Caco-2 (cell line): ENCODE measurements at regions of chr11 and their contacts with region 1.

Region 1: GRCh38 chr11:6531267-6531752 is 34.2 kb downstream of the DNHD1 start:
- DNase-seq: peak in 1 of 2 experiments; percentile 55
- H3K4me3 ChIP-seq: no peak overlapping the region
- H3K4me3 Mint-ChIP-seq: no peak overlapping the region
- H3K27ac Mint-ChIP-seq: no peak overlapping the region
- H3K4me1 ChIP-seq: peaks cover 4% of the 10 kb centered on the region; the same call in 1 of the 2 replicates
- H3K4me1 Mint-ChIP-seq: peaks cover 6% of the 10 kb centered on the region
- H3K27me3 ChIP-seq: no peaks in the 10 kb centered on the region
- H3K27me3 Mint-ChIP-seq: no peaks in the 10 kb centered on the region
- CTCF ChIP-seq: peak; percentile 74 to 80

Region 2: GRCh38 chr11:6156628-6157359 is 374.5 kb before region 1 on chr11:
- CTCF ChIA-PET with region 1: no interaction called
- POLR2A ChIA-PET with region 1: no interaction called
- intact Hi-C with region 1: no loop called
- DNase-seq: no peak
- H3K4me3 ChIP-seq: no peak overlapping the region
- H3K4me3 Mint-ChIP-seq: no peak overlapping the region
- H3K27ac Mint-ChIP-seq: no peak overlapping the region
- H3K4me1 ChIP-seq: no peaks in the 10 kb centered on the region
- H3K4me1 Mint-ChIP-seq: no peaks in the 10 kb centered on the region
- H3K27me3 ChIP-seq: no peaks in the 10 kb centered on the region
- H3K27me3 Mint-ChIP-seq: peaks cover 3% of the 10 kb centered on the region
- CTCF ChIP-seq: no peak

Region 3: GRCh38 chr11:6635082-6635932 is 104.0 kb after region 1 on chr11:
- CTCF ChIA-PET with region 1: interaction called, 6 read pairs
- POLR2A ChIA-PET with region 1: no interaction called
- intact Hi-C with region 1: loop called (anchors 1 kb)
- DNase-seq: peak; percentile 22 to 67
- H3K4me3 ChIP-seq: no peak overlapping the region
- H3K4me3 Mint-ChIP-seq: no peak overlapping the region
- H3K27ac Mint-ChIP-seq: no peak overlapping the region
- H3K4me1 ChIP-seq: peaks cover 16% of the 10 kb centered on the region
- H3K4me1 Mint-ChIP-seq: no peaks in the 10 kb centered on the region
- H3K27me3 ChIP-seq: no peaks in the 10 kb centered on the region; the same call in 1 of the 2 replicates
- H3K27me3 Mint-ChIP-seq: no peaks in the 10 kb centered on the region
- CTCF ChIP-seq: no peak

Region 4: DNA sequence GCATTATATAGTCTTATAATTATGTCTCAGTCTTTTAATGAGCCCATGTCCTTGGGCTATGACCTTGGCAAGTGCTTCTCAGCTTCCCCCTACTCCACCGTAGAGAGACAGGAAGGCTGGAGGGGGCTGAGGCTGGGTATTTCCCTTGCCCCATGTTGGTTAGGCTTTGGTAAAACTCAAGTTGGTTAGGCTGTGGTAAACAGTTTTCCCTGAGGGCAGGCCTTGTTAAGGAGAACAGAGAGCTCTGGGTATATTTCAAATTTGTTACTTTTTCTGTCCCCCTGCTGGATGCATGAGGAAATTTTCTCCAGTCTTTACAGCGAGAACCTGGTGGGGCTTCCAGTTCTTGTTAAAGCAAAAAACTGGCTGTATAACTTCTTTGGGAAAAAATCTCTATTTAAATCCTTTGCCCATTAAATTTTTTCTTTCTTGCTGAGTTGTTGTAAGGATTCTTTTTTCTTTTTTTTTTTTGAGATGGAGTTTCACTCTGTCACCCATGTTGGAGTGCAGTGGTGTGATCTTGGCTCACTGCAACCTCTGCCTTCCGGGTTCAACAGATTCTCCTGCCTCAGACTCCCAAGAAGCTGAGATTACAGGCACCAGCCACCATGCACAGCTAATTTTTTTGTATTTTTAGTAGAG is 136.5 kb after region 1 on chr11:
- CTCF ChIA-PET with region 1: interaction called, 9 read pairs
- POLR2A ChIA-PET with region 1: no interaction called
- intact Hi-C with region 1: loop called (anchors 1 kb)
- DNase-seq: peak in 1 of 2 experiments; percentile 45
- H3K4me3 ChIP-seq: no peak overlapping the region
- H3K4me3 Mint-ChIP-seq: no peak overlapping the region
- H3K27ac Mint-ChIP-seq: no peak overlapping the region
- H3K4me1 ChIP-seq: no peaks in the 10 kb centered on the region
- H3K4me1 Mint-ChIP-seq: no peaks in the 10 kb centered on the region
- H3K27me3 ChIP-seq: no peaks in the 10 kb centered on the region
- H3K27me3 Mint-ChIP-seq: peaks cover 15% of the 10 kb centered on the region
- CTCF ChIP-seq: peak; percentile 62 to 64

Region 5: GRCh38 chr11:6682936-6683861 is 151.9 kb after region 1 on chr11 and contains the start of gene MRPL17:
- CTCF ChIA-PET with region 1: interaction called, 26 read pairs
- POLR2A ChIA-PET with region 1: interaction called, 3 read pairs
- intact Hi-C with region 1: loop called (anchors 1 kb)
- DNase-seq: peak; percentile 99
- H3K4me3 ChIP-seq: peak within 1 kb of the TSS; percentile 88
- H3K4me3 Mint-ChIP-seq: peak within 1 kb of the TSS; percentile 100
- H3K27ac Mint-ChIP-seq: peak within 1 kb of the TSS; percentile 100
- H3K4me1 ChIP-seq: peaks cover 13% of the 10 kb centered on the region
- H3K4me1 Mint-ChIP-seq: peaks cover 7% of the 10 kb centered on the region
- H3K27me3 ChIP-seq: no peaks in the 10 kb centered on the region
- H3K27me3 Mint-ChIP-seq: peaks cover 5% of the 10 kb centered on the region
- CTCF ChIP-seq: peak; percentile 89 to 91
- total RNA-seq, gene MRPL17: 57.8 and 60.8 TPM in 2 replicates

Region 6: GRCh38 chr11:6757373-6757967 is 226.2 kb after region 1 on chr11:
- CTCF ChIA-PET with region 1: interaction called, 4 read pairs
- POLR2A ChIA-PET with region 1: no interaction called
- intact Hi-C with region 1: loop called (anchors 5 kb)
- DNase-seq: peak; percentile 46 to 54
- H3K4me3 ChIP-seq: no peak overlapping the region
- H3K4me3 Mint-ChIP-seq: no peak overlapping the region
- H3K27ac Mint-ChIP-seq: no peak overlapping the region
- H3K4me1 ChIP-seq: no peaks in the 10 kb centered on the region
- H3K4me1 Mint-ChIP-seq: no peaks in the 10 kb centered on the region
- H3K27me3 ChIP-seq: peaks cover 1% of the 10 kb centered on the region
- H3K27me3 Mint-ChIP-seq: peaks cover 8% of the 10 kb centered on the region
- CTCF ChIP-seq: peak; percentile 60 to 84

Region 7: GRCh38 chr11:7020183-7020917 is 489.0 kb after region 1 on chr11 and contains the starts of genes NLRP14 and ZNF214:
- CTCF ChIA-PET with region 1: no interaction called
- POLR2A ChIA-PET with region 1: no interaction called
- intact Hi-C with region 1: no loop called
- DNase-seq: peak; percentile 88 to 96
- H3K4me3 ChIP-seq: peak within 1 kb of the TSS; percentile 40
- H3K4me3 Mint-ChIP-seq: peak within 1 kb of the TSS; percentile 87
- H3K27ac Mint-ChIP-seq: peak within 1 kb of the TSS; percentile 87
- H3K4me1 ChIP-seq: 0 out of 2 replicates have a peak, but pooled peaks cover 5% of the 10 kb centered on the region
- H3K4me1 Mint-ChIP-seq: peaks cover 5% of the 10 kb centered on the region
- H3K27me3 ChIP-seq: no peaks in the 10 kb centered on the region
- H3K27me3 Mint-ChIP-seq: peaks cover 6% of the 10 kb centered on the region
- CTCF ChIP-seq: no peak
- total RNA-seq, gene NLRP14: not detected in 2 replicates
- total RNA-seq, gene ZNF214: 0.16 and 0.70 TPM in 2 replicates

Region 8: DNA sequence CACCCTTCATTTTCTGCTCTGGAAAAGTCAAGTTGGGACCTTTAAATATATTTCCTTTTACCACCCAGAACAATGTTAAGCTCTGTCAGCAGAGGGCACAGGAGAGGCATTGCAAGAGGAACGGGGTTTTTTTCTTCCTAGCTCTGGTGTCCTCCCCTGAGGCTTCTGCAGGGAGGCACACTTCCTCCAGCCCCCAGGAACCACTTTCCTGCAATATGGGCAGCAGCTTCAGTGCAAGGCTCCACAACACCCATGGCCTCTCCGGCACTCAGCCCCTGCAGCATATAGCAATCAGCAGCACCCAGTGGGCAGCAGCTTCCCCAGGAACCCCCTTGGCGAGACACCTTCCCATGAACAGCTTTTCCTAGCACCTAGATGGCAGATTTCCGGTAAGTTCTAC is 821.8 kb after region 1 on chr11:
- CTCF ChIA-PET with region 1: no interaction called
- POLR2A ChIA-PET with region 1: no interaction called
- intact Hi-C with region 1: no loop called
- DNase-seq: peak; percentile 39 to 63
- H3K4me3 ChIP-seq: no peak overlapping the region
- H3K4me3 Mint-ChIP-seq: no peak overlapping the region
- H3K27ac Mint-ChIP-seq: no peak overlapping the region
- H3K4me1 ChIP-seq: no peaks in the 10 kb centered on the region
- H3K4me1 Mint-ChIP-seq: no peaks in the 10 kb centered on the region
- H3K27me3 ChIP-seq: no peaks in the 10 kb centered on the region; the same call in 1 of the 2 replicates
- H3K27me3 Mint-ChIP-seq: peaks cover 15% of the 10 kb centered on the region
- CTCF ChIP-seq: peak; percentile 63 to 76